ENCODE measurements at regions of chr5 and their contacts with region 1.

Region 1: GRCh38 chr5:139787568-139788293 is 7.9 kb upstream of the PSD2 start:
- DNase-seq: peak; percentile 86
- H3K4me3 Mint-ChIP-seq: peak overlapping the region; percentile 70
- H3K27ac Mint-ChIP-seq: no peak overlapping the region
- H3K4me1 Mint-ChIP-seq: peaks cover 13% of the 10 kb centered on the region
- H3K27me3 Mint-ChIP-seq: peaks cover 91% of the 10 kb centered on the region

Region 2: DNA sequence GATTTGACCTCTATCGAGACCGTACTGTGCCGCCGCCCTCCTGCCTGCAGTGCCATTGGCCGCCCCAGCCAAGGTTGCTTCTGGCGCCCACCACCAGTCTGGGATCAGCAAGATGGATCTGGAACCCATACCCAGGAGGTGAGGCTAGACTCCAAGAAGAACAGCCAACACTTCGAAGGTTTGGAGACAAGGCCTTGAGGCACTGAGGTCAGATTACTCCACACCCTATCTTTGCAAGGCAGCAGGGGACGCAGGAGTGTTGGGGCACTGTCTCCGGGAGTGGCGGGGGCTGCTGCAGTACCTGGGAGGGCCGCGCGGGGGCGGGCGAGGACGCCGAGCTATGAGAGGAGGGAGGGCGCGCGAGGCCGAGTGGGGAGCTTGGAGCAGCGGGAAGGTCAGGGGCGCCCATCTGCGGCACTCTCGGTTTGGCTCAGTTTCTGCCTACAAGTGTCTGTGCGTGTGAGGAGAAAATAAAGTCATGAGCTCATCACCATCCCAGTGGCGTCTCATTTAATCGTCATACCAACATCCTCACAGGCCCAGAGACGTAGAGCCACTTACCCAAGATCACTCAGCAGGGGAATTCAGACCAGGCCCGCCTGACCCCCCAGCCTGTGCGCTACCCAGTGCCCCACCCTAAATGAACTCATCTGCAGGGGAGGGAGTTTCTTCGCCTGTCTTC is 12.6 kb before region 1 on chr5:
- CTCF ChIA-PET with region 1: interaction called, 35 read pairs
- DNase-seq: peak; percentile 83
- H3K4me3 Mint-ChIP-seq: no peak overlapping the region
- H3K27ac Mint-ChIP-seq: no peak overlapping the region
- H3K4me1 Mint-ChIP-seq: peaks cover 7% of the 10 kb centered on the region
- H3K27me3 Mint-ChIP-seq: peaks cover 56% of the 10 kb centered on the region

Region 3: DNA sequence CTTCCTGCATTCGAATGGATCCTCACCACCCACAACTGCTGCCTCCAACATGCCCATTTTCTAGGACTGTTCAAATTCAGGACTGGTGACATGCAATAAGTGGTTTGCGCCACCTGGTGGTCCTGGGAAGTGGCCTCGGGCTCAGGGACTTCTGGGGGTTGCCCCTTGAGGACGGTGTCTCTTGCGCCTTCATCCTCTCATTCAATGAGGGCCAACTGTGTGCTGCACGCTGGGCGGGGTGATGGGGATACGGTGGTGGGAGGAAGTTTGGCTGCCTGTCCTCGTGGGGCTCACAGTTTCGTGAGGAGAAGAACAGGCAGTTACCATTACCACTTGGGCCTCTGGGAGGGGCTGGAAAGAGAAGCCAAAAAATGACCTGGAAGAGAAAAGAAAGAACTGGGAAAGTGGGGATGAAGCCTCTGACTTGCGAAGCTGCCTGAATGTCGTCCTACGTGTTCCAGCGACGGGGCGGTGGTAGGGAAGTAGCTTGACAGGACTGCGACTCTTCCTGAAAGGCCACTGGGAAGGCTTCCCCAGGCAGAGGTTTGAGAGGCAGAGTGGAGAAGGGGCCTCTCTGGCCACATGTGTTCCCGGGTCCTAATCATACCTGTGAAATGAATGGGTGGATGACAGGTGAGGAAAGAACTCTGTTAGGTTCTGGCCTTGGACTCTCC is 56.9 kb after region 1 on chr5:
- CTCF ChIA-PET with region 1: interaction called, 44 read pairs
- DNase-seq: peak; percentile 80
- H3K4me3 Mint-ChIP-seq: no peak overlapping the region
- H3K27ac Mint-ChIP-seq: no peak overlapping the region
- H3K4me1 Mint-ChIP-seq: peaks cover 6% of the 10 kb centered on the region
- H3K27me3 Mint-ChIP-seq: peaks cover 64% of the 10 kb centered on the region

Region 4: DNA sequence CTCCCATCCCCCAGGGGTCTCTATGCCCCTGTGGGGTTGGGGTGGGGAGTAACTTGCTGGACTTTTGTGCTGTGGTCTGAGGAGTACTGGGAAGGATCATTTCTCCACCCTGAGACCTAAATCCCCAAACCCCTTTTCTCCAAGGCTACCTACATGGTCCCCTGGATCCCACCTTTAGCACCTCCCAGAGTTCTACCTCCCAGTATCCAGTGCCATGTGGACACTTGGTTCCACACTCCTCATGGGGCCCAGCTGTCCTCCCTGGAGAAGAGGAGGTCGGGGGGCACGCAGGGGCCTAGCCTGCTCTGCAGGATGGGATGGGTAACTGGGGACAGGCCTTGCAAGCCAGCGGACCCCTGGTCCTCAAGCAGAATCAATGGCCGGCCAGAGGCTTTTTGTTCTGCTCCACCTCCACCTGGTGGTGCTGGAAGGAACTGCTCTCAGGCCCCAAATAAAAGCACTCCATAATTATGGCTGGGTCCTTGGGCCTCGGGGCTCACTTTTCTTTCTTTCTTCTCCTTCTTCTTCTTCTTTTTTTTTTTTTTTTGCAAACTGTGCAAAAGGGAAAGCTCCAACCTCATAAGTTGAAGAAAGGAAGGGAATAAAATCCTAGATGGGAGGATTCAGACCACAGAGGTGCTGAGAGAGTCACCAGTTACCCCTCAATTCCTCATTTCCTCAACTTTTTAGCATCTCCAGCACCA is 76.3 kb after region 1 on chr5:
- CTCF ChIA-PET with region 1: interaction called, 22 read pairs
- DNase-seq: peak; percentile 68
- H3K4me3 Mint-ChIP-seq: no peak overlapping the region
- H3K27ac Mint-ChIP-seq: no peak overlapping the region
- H3K4me1 Mint-ChIP-seq: no peaks in the 10 kb centered on the region
- H3K27me3 Mint-ChIP-seq: peaks cover 49% of the 10 kb centered on the region